Dorsolateral prefrontal cortex (tissue), 120 donors: ENCODE measurements at regions of chr12 and their contacts with region 1.

Region 1: GRCh38 chr12:575948-576612 is 87.2 kb downstream of the NINJ2 start:
- DNase-seq: peak in 9 of 10 donors; percentile 45 to 89 (median 67)
- H3K4me3 ChIP-seq: peak overlapping the region in 50 of 59 donors; percentile 7 to 51 (median 32)
- H3K27ac ChIP-seq: peak overlapping the region in 54 of 59 donors; percentile 0 to 83 (median 60)
- H3K27me3 ChIP-seq: no peaks in the 10 kb centered on the region
- CTCF ChIP-seq: peak; percentile 94 to 100 (median 99)

Region 2: DNA sequence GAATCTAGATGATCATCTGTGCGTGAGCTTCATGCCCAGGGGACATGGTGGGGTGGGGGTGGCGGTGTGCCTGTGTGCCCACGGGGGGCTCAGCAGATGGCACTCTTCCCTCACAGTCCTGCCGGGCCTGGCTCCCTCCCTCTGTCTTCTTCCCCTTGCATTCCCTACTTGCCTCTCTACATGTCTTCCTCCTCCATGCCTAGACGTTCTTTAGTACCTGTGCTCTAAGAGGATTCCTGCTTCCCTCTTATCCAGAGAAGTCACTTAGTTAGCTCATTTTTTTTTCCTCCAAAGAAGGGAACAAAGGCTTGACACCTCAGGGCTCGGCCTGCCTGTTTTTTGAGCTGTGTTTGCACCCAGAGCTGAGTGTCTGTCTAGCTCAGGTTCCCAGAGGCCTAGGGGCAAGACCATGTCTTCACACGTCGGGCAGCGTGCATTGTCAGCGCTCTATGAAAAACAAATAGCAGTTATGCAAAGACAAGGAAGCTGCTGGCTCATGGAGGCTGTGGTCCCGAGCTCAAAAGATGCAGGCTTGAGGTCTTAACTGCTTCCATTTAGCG is 38.4 kb after region 1 on chr12:
- intact Hi-C with region 1: loop called in 1 of 2 experiments (anchors 5 kb)
- DNase-seq: peak in 7 of 10 donors; percentile 32 to 67 (median 56)
- H3K4me3 ChIP-seq: no peak overlapping the region
- H3K27ac ChIP-seq: peak overlapping the region in 39 of 59 donors; percentile 4 to 79 (median 52)
- H3K27me3 ChIP-seq: no peaks in the 10 kb centered on the region
- CTCF ChIP-seq: peak in 53 of 56 donors; percentile 22 to 77 (median 48)

Region 3: DNA sequence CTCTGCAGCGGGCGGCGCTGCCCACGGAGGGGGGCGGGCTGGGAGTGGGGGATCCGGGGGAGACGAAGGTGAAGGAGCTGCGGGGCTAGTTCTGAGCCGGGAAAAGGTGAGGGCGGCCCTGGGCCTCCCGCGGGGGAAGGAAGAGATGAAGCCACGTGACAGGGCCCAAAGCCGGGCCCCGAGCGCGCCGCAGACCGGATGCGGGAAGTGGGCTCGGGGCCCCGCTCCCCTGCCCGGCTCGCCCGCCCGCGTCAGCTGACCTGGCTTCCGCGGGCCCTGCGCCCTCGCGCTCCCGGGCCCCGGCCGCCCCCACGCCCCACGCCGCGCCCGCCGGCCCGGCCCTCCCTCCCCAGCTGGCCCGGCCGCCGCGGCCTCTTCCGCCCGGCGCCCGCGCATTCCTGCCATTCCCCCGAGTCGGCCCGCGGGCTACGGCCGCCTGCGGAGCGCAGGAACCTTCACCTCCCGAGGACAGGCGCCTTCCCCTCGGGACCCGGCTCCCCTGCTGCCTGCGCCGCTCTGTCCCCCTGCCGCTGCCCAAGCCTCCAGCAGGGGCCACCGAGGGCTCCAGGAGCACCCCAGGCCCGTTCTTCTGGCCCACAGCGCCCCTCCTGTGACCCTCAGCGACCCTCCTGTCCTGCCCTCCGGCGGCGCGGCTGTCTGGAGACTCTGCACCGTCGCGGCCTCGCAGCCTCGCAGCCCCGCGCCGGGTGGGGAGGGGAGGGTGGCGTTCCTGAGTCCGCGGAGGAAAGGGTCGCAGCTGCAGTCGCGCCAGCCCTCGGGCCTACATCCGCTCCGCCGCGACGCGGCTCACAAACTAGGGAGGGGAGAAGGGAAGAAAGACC is 66.8 kb after region 1 on chr12:
- intact Hi-C with region 1: loop called (anchors 10 kb)
- DNase-seq: peak; percentile 45 to 81 (median 60)
- H3K4me3 ChIP-seq: peak overlapping the region; percentile 45 to 81 (median 70)
- H3K27ac ChIP-seq: peak overlapping the region; percentile 83 to 100 (median 97)
- H3K27me3 ChIP-seq: no peaks in the 10 kb centered on the region
- CTCF ChIP-seq: peak in 32 of 56 donors; percentile 1 to 48 (median 23)

Region 4: GRCh38 chr12:810671-811415 is 234.8 kb after region 1 on chr12:
- intact Hi-C with region 1: loop called (anchors 2 to 5 kb)
- DNase-seq: peak in 1 of 10 donors; percentile 21
- H3K4me3 ChIP-seq: peak overlapping the region in 7 of 59 donors; percentile 4 to 35 (median 16)
- H3K27ac ChIP-seq: peak overlapping the region in 41 of 59 donors; percentile 0 to 74 (median 40)
- H3K27me3 ChIP-seq: no peaks in the 10 kb centered on the region
- CTCF ChIP-seq: no peak

Region 5: DNA sequence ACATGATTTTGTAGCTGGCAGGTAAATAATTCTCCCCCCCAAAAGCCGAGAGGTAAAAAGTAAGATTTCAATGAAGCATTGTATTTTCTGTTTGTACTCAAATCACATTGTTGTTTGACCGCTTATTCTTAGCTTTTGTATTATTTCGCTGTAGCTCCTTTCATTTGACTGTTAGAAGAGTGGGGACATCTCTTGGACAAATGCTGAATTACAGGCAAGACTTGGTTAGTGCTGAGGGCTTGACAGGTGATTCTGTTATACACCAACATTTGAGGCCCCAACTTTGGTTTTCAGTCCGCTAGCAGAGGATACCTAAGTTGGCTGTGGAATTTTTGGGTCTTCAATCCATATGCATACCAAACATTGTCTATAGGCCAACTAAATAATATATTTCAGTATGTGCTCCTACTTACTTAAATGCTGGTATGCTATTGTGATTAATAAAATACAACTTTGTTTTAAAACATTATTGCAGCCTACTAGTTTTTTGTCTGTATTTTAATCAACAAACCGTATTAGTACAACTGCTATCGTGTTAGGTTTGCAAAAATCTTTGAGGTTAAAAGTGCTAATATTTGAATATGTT is 517.2 kb after region 1 on chr12:
- intact Hi-C with region 1: loop called (anchors 5 kb)
- DNase-seq: no peak
- H3K4me3 ChIP-seq: no peak overlapping the region
- H3K27ac ChIP-seq: peak overlapping the region in 3 of 59 donors; percentile 9 to 56 (median 13)
- H3K27me3 ChIP-seq: no peaks in the 10 kb centered on the region
- CTCF ChIP-seq: peak; percentile 29 to 85 (median 68)

Region 6: DNA sequence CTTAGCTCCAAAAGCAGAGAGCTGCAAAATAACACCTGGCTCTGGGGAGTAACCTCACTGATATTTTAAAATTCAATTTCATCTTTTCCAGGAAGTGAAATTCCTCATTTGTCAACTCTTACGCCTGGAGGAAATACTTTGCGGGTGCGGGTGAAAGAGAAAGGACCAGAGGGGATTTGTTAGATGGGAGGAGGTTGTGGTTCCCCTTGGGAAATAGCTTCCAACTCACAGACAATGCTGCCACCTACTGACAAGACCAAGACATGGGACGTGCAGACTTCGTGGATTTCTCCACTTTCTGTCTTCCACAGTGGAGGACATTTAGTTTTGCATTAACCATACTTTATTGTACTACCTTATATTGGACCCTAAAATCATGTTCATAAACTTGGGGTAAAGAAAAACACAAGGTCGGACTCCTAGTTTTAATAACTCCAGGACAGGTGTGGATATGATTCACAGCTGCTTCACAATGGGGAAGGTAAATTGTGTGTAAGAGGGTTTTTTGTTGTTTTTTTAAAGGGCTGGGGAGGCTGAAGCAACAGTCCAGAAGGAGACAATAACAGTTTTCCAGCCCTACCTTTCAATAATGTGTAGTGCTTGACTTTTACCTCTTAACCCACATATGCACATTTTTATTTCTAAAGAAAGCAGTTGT is 1007.5 kb after region 1 on chr12:
- intact Hi-C with region 1: loop called in 1 of 2 experiments (anchors 10 kb)
- DNase-seq: peak in 8 of 10 donors; percentile 50 to 78 (median 67)
- H3K4me3 ChIP-seq: peak overlapping the region in 45 of 59 donors; percentile 10 to 54 (median 28)
- H3K27ac ChIP-seq: peak overlapping the region in 1 of 59 donors; percentile 30
- H3K27me3 ChIP-seq: no peaks in the 10 kb centered on the region
- CTCF ChIP-seq: peak; percentile 79 to 97 (median 90)